ENCODE measurements at regions of chr17 and their contacts with region 1.

Region 1: GRCh38 chr17:2172077-2172851 is 117.4 kb downstream of the HIC1 start:
- DNase-seq: peak; percentile 75 to 88 (median 84)
- ATAC-seq: peak; percentile 59 to 84 (median 80)
- H3K4me3 ChIP-seq: peak overlapping the region in 9 of 12 donors; percentile 12 to 43 (median 24)
- H3K27ac ChIP-seq: peak overlapping the region; percentile 36 to 97 (median 87)
- H3K4me1 ChIP-seq: peaks cover 19 to 79% (median 61%) of the 10 kb centered on the region in 12 donors
- H3K27me3 ChIP-seq: no peaks in the 10 kb centered on the region
- CTCF ChIP-seq: no peak
- POLR2A ChIP-seq: no peak

Region 2: DNA sequence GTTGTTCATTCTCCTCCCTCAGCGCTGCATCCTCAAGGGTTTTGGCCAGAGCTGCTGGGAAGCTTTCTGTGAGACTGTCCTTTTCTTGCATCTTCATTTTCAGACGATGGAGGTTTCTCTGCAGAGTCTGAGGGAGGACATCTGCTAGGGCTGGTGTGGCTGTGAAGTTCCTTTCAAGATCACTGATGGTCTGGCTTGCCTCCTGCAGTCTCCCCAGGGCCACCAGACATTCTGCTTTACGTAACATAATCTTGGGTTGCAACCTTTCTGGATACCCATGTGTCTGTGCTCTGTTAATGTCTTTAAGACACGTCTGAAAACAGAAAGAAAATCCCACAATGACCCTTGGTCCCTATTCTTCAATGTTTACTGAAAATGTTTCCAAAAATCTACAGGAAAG is 371.6 kb before region 1 on chr17:
- intact Hi-C with region 1: no loop called
- DNase-seq: no peak
- ATAC-seq: no peak
- H3K4me3 ChIP-seq: no peak overlapping the region
- H3K27ac ChIP-seq: peak overlapping the region in 11 of 12 donors; percentile 3 to 89 (median 61)
- H3K4me1 ChIP-seq: peaks cover 0 to 34% (median 15%) of the 10 kb centered on the region in 12 donors
- H3K27me3 ChIP-seq: no peaks in the 10 kb centered on the region
- CTCF ChIP-seq: no peak
- POLR2A ChIP-seq: no peak

Region 3: GRCh38 chr17:2064980-2065785 is 107.1 kb before region 1 on chr17:
- intact Hi-C with region 1: loop called in 7 of 10 experiments (anchors 2 to 5 kb)
- DNase-seq: peak in 4 of 5 donors; percentile 57 to 79 (median 66)
- ATAC-seq: peak in 3 of 4 donors; percentile 8 to 31 (median 17)
- H3K4me3 ChIP-seq: no peak overlapping the region
- H3K27ac ChIP-seq: peak overlapping the region in 11 of 12 donors; percentile 67 to 98 (median 93)
- H3K4me1 ChIP-seq: peaks cover 3 to 94% (median 85%) of the 10 kb centered on the region in 12 donors
- H3K27me3 ChIP-seq: peaks cover 0 to 6% (median 0%) of the 10 kb centered on the region in 9 donors
- CTCF ChIP-seq: peak in 9 of 12 donors; percentile 5 to 56 (median 23)
- POLR2A ChIP-seq: no peak

Region 4: GRCh38 chr17:2094891-2095535 is 77.3 kb before region 1 on chr17:
- intact Hi-C with region 1: loop called in 3 of 10 experiments (anchors 5 to 10 kb)
- DNase-seq: peak; percentile 76 to 87 (median 82)
- ATAC-seq: peak; percentile 85 to 93 (median 92)
- H3K4me3 ChIP-seq: peak overlapping the region in 1 of 12 donors; percentile 16
- H3K27ac ChIP-seq: peak overlapping the region in 11 of 12 donors; percentile 8 to 57 (median 45)
- H3K4me1 ChIP-seq: peaks cover 0 to 43% (median 27%) of the 10 kb centered on the region in 12 donors
- H3K27me3 ChIP-seq: no peaks in the 10 kb centered on the region
- CTCF ChIP-seq: peak; percentile 37 to 82 (median 74)
- POLR2A ChIP-seq: no peak

Region 5: GRCh38 chr17:2111719-2112118 is 60.5 kb before region 1 on chr17:
- intact Hi-C with region 1: loop called in 3 of 10 experiments (anchors 2 to 10 kb)
- DNase-seq: no peak
- ATAC-seq: no peak
- H3K4me3 ChIP-seq: no peak overlapping the region
- H3K27ac ChIP-seq: no peak overlapping the region
- H3K4me1 ChIP-seq: peaks cover 0 to 19% (median 12%) of the 10 kb centered on the region in 12 donors
- H3K27me3 ChIP-seq: no peaks in the 10 kb centered on the region
- CTCF ChIP-seq: no peak
- POLR2A ChIP-seq: no peak

Region 6: GRCh38 chr17:2215616-2216364 is 43.5 kb after region 1 on chr17:
- intact Hi-C with region 1: loop called (anchors 1 to 5 kb)
- DNase-seq: peak; percentile 81 to 88 (median 84)
- ATAC-seq: peak; percentile 70 to 80 (median 80)
- H3K4me3 ChIP-seq: peak overlapping the region in 10 of 12 donors; percentile 12 to 47 (median 40)
- H3K27ac ChIP-seq: peak overlapping the region; percentile 74 to 95 (median 88)
- H3K4me1 ChIP-seq: peaks cover 6 to 58% (median 46%) of the 10 kb centered on the region in 12 donors
- H3K27me3 ChIP-seq: no peaks in the 10 kb centered on the region
- CTCF ChIP-seq: peak in 1 of 12 donors; percentile 8
- POLR2A ChIP-seq: no peak